Gastrocnemius medialis (tissue), 4 donors: ENCODE measurements at regions of chr4 and their contacts with region 1.

Region 1: DNA sequence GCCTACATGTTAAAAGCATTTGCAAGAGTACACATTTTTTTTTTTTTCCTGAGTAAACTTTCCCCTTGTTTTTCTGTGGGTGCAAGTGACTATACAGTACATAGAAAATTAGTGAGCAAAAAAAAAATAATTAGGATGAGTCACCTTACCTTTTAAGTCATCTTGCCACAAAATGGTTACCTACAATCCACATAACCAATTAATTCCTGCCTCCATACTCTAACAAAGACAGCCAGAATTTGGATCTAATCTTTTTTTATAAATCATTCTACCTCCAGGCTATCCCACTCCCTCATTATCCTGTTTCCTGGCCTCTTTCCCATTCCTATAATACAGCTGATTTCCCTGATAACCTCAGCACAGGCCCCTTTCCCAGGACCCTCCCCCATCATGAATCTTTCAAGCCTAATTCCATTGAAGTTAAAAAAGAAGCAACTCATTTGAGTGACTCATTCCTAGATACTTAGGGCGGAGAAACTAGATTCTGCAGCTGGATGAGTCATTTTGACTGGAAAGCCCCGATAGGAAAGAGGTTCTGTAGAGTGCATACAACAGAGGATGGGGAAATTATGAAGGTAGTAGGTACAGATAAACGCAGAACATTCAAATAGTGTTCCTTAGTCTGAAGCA is 128.2 kb downstream of the C4orf51 start:
- DNase-seq: no peak
- ATAC-seq: peak; percentile 67 to 71
- H3K4me3 ChIP-seq: no peak overlapping the region
- H3K27ac ChIP-seq: peak overlapping the region in 2 of 4 donors; percentile 10 to 58
- H3K4me1 ChIP-seq: peaks cover 23 to 30% of the 10 kb centered on the region in 2 donors
- H3K27me3 ChIP-seq: no peaks in the 10 kb centered on the region
- CTCF ChIP-seq: no peak
- POLR2A ChIP-seq: no peak

Region 2: DNA sequence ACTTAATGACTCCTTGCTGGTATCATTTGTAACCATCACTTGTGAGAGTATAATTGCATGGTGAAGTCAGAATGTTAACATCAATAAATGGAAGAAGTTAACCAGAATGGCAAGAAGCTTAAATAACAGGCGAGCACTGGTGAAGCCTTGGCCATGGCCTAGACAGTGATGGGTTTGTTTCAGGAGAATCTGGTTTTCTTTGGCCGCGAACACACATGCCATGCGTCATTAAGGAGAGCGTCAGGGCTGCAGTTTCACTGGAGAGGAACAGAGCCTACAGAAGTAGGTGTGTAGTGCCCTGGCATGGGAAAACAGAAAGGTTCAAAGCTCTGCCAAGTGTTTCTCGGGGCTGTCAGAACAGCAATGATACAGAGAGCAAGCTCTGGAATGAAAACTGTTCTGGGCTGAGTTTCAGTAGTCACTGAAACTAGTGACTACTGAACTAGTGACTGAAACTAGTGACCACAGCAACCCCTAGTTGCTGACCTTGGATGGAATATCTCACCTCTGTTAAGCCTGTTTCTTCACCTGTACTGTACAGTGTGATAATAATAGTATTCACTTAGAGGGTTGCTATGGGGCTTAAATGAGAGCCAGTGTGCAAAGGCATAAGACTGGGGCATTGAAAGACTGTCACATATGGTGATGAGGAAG is 34.4 kb before region 1 on chr4:
- in situ Hi-C with region 1: no loop called
- intact Hi-C with region 1: no loop called
- DNase-seq: peak; percentile 33 to 34
- ATAC-seq: peak; percentile 71 to 82
- H3K4me3 ChIP-seq: no peak overlapping the region
- H3K27ac ChIP-seq: peak overlapping the region; percentile 74 to 79 (median 76)
- H3K4me1 ChIP-seq: peaks cover 6 to 23% of the 10 kb centered on the region in 2 donors
- H3K27me3 ChIP-seq: no peaks in the 10 kb centered on the region
- CTCF ChIP-seq: no peak
- POLR2A ChIP-seq: no peak

Region 3: GRCh38 chr4:145936142-145936996 is 128.2 kb after region 1 on chr4:
- in situ Hi-C with region 1: no loop called
- intact Hi-C with region 1: loop called (anchors 2 kb)
- DNase-seq: peak; percentile 56 to 79
- ATAC-seq: peak; percentile 67 to 73
- H3K4me3 ChIP-seq: peak overlapping the region; percentile 71 to 90 (median 84)
- H3K27ac ChIP-seq: peak overlapping the region; percentile 91 to 99 (median 94)
- H3K4me1 ChIP-seq: peaks cover 25 to 34% of the 10 kb centered on the region in 2 donors
- H3K27me3 ChIP-seq: no peaks in the 10 kb centered on the region
- CTCF ChIP-seq: peak in 4 of 5 experiments; percentile 23 to 41 (median 34)
- POLR2A ChIP-seq: peak in 1 of 2 donors; percentile 53

Region 4: GRCh38 chr4:146522098-146522868 is 714.1 kb after region 1 on chr4:
- in situ Hi-C with region 1: no loop called
- intact Hi-C with region 1: loop called (anchors 10 kb)
- DNase-seq: peak; percentile 78 to 84
- ATAC-seq: peak; percentile 92 to 93
- H3K4me3 ChIP-seq: peak overlapping the region; percentile 89 to 97 (median 92)
- H3K27ac ChIP-seq: peak overlapping the region; percentile 85 to 90 (median 87)
- H3K4me1 ChIP-seq: peaks cover 21 to 25% of the 10 kb centered on the region in 2 donors
- H3K27me3 ChIP-seq: no peaks in the 10 kb centered on the region
- CTCF ChIP-seq: no peak
- POLR2A ChIP-seq: peak; percentile 66 to 72